Dorsolateral prefrontal cortex (tissue), 120 donors: ENCODE measurements at regions of chr5 and their contacts with region 1.

Region 1: DNA sequence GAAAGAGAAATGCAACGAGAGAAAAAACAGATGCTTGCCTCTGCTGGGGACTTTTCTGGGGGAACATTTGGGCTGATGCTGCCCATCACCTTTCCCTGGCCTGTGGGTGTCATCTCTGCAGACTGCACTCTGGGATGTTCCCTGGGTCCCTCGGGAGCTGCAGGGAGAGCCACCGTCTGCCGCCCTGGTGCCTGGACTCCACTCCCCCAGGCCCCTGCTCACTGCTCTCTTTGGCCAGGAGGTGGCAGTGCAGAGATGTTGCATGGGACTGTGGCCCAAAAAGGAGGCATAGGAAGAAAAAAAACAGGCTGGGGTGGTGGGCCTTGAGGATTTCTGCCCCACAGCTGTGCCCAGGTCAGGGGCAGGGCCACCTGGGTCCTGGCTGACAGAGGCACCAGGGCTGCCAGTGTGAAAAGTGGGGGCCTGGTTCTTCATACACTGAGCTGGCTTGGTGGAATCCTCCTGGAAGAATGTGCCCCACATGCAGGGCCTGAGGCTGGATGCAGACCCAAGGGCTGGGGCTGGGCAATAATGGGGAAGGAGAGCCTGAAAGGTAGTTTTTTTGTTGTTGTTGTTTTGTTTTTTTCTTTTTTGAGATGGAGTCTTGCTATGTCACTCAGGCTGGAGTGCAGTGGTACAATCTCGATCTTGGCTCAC is 353.6 kb downstream of the SLIT3 start:
- DNase-seq: peak in 2 of 10 donors; percentile 27 to 54
- H3K4me3 ChIP-seq: no peak overlapping the region
- H3K27ac ChIP-seq: no peak overlapping the region
- H3K27me3 ChIP-seq: no peaks in the 10 kb centered on the region
- CTCF ChIP-seq: peak in 54 of 56 donors; percentile 29 to 75 (median 63)

Region 2: GRCh38 chr5:168706655-168707069 is 240.7 kb before region 1 on chr5:
- intact Hi-C with region 1: loop called (anchors 5 to 10 kb)
- DNase-seq: peak in 9 of 10 donors; percentile 34 to 82 (median 57)
- H3K4me3 ChIP-seq: no peak overlapping the region
- H3K27ac ChIP-seq: peak overlapping the region in 1 of 59 donors; percentile 82
- H3K27me3 ChIP-seq: peaks cover 0 to 2% (median 0%) of the 10 kb centered on the region in 45 donors
- CTCF ChIP-seq: peak in 54 of 56 donors; percentile 34 to 76 (median 61)

Region 3: DNA sequence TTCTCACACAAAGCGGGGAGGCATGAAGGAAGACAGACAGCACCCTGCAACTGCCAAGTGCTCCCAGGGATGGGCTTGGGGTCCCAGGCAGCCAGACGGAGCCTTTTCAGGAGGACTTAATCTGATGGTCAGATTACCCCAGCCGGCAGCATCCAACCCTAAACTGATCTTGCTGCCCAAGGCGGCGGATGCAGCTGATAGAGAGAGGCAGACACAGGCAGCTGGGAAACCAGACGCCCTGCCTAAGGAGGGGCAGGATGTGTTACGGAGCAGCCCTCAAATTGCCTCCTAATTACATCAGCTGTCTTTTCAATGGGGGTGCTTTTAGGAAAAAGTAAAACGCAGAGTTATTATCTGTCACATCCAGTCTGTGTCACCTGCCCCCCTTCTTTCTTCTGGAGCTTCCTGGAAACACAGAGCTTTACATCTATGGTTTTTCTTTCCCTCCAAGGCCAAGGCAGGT is 177.3 kb before region 1 on chr5:
- intact Hi-C with region 1: loop called in 1 of 2 experiments (anchors 10 kb)
- DNase-seq: no peak
- H3K4me3 ChIP-seq: no peak overlapping the region
- H3K27ac ChIP-seq: no peak overlapping the region
- H3K27me3 ChIP-seq: peaks cover 0 to 12% (median 0%) of the 10 kb centered on the region in 45 donors
- CTCF ChIP-seq: no peak